HEK293T (cell line): ENCODE measurements at regions of chr2 and their contacts with region 1.

Region 1: GRCh38 chr2:54704688-54705605 is 18.5 kb upstream of the EML6 start:
- DNase-seq: peak; percentile 34

Region 2: GRCh38 chr2:54106631-54107454 is 598.1 kb before region 1 on chr2:
- CTCF ChIA-PET with region 1: interaction called, 16 read pairs
- POLR2A ChIA-PET with region 1: no interaction called
- DNase-seq: peak; percentile 53

Region 3: GRCh38 chr2:54665436-54665856 is 39.5 kb before region 1 on chr2:
- CTCF ChIA-PET with region 1: interaction called, 32 read pairs
- POLR2A ChIA-PET with region 1: no interaction called
- DNase-seq: peak; percentile 51